ENCODE measurements at regions of chr16 and their contacts with region 1.

Region 1: DNA sequence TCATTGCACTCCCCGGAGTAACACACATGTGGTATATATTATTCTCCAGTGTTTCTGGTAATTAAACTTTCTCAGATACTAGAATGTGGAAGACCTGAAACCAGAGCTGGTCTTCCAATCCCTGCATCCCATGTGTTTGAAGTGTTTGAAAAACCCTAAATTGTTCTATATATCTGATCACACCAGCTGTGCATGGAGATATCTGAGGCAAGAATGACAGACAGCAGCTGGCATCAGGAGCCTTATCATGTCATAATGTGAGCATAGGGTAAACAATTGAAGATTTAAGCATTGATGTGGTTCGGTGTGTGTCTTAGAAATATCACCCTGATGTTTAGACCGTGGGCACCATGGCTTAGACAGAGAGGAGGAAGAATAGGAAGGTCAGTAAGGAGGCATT is 251.0 kb downstream of the CDH11 start:
- DNase-seq: no peak
- H3K4me3 ChIP-seq: no peak overlapping the region
- H3K27ac ChIP-seq: no peak overlapping the region
- H3K4me1 ChIP-seq: no peaks in the 10 kb centered on the region
- H3K27me3 ChIP-seq: no peaks in the 10 kb centered on the region
- CTCF ChIP-seq: no peak

Region 2: DNA sequence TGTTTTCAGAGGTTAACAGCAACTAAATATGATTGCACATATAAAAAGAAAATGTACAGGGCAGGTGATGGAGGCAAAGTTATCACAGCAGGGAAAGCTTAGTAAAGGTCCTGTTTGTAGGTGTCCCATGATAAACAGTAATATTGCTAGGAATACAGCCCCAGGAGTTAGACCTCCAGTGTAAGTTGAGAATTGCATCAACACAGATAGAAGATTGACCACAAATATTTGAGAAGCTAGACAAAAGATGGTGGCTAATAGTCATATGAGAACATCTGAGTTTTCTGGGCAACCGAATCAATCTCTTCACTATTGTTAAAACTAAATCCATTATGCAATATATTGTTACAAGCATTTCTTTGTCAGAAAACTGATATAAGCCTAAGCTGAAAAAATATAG is 98.4 kb after region 1 on chr16:
- CTCF ChIA-PET with region 1: no interaction called
- POLR2A ChIA-PET with region 1: no interaction called
- intact Hi-C with region 1: loop called (anchors 5 kb)
- DNase-seq: no peak
- H3K4me3 ChIP-seq: no peak overlapping the region
- H3K27ac ChIP-seq: no peak overlapping the region
- H3K4me1 ChIP-seq: peaks cover 49% of the 10 kb centered on the region
- H3K27me3 ChIP-seq: no peaks in the 10 kb centered on the region
- CTCF ChIP-seq: no peak

Measured in A673 (cell line).